ENCODE measurements at regions of chr13 and their contacts with region 1.

Region 1: GRCh38 chr13:52194184-52194868 is 34.9 kb upstream of the NEK3 start:
- DNase-seq: peak; percentile 77 to 92 (median 84)
- ATAC-seq: peak; percentile 94
- H3K4me3 ChIP-seq: peak overlapping the region; percentile 67
- H3K4me3 Mint-ChIP-seq: peak overlapping the region; percentile 88 to 99 (median 98)
- H3K27ac ChIP-seq: peak overlapping the region; percentile 78
- H3K27ac Mint-ChIP-seq: peak overlapping the region; percentile 90 to 98 (median 95)
- H3K4me1 ChIP-seq: no peaks in the 10 kb centered on the region
- H3K4me1 Mint-ChIP-seq: peaks cover 15 to 42% (median 37%) of the 10 kb centered on the region in 7 donors
- H3K27me3 ChIP-seq: no peaks in the 10 kb centered on the region
- H3K27me3 Mint-ChIP-seq: peaks cover 0 to 3% (median 0%) of the 10 kb centered on the region in 5 donors

Region 2: DNA sequence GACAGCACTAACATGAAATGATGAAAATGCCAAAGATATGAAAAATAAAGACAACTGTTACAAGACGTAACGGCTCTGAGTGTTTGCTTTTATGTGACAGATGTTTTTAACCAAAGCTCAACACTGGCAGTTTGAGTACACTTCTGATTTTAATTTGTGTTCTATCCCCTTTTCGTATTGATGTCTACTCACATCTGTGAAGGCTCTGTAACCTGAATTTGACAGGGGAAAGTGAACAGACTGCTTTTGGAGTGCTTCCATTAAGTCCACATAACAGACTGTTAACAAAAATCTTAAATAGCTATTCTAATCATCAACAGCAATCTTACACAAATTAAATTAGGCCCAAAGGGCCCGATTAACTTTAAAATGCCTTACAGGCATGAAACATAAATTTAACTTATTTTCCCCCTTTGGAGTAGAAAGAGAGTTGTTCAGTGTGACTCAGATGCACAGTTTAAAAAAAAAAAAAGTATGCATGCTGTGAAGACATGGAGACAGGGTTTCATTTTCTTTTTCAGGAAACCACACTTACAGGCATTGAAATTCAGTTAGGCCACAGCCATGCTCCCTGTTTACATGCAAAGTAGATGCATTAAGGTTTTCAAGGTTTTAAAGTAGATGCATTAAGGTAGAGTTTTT is 1301.0 kb before region 1 on chr13:
- CTCF ChIA-PET with region 1: no interaction called
- POLR2A ChIA-PET with region 1: no interaction called
- intact Hi-C with region 1: loop called in 1 of 2 experiments (anchors 10 kb)
- DNase-seq: peak in 7 of 9 donors; percentile 34 to 68 (median 55)
- ATAC-seq: peak; percentile 91
- H3K4me3 ChIP-seq: peak overlapping the region; percentile 30
- H3K4me3 Mint-ChIP-seq: peak overlapping the region; percentile 67 to 88 (median 82)
- H3K27ac ChIP-seq: peak overlapping the region; percentile 69
- H3K27ac Mint-ChIP-seq: peak overlapping the region; percentile 82 to 98 (median 95)
- H3K4me1 ChIP-seq: peaks cover 16 to 27% of the 10 kb centered on the region in 2 donors
- H3K4me1 Mint-ChIP-seq: peaks cover 26 to 50% (median 47%) of the 10 kb centered on the region in 7 donors
- H3K27me3 ChIP-seq: no peaks in the 10 kb centered on the region
- H3K27me3 Mint-ChIP-seq: no peaks in the 10 kb centered on the region

Region 3: GRCh38 chr13:51825165-51825592 is 369.1 kb before region 1 on chr13:
- CTCF ChIA-PET with region 1: interaction called, 3 read pairs
- POLR2A ChIA-PET with region 1: interaction called, 8 read pairs
- intact Hi-C with region 1: loop called (anchors 2 kb)
- DNase-seq: peak in 7 of 9 donors; percentile 62 to 90 (median 84)
- ATAC-seq: peak; percentile 81
- H3K4me3 ChIP-seq: peak overlapping the region; percentile 75
- H3K4me3 Mint-ChIP-seq: peak overlapping the region; percentile 62 to 100 (median 97)
- H3K27ac ChIP-seq: peak overlapping the region; percentile 85
- H3K27ac Mint-ChIP-seq: peak overlapping the region; percentile 86 to 99 (median 95)
- H3K4me1 ChIP-seq: peaks cover 61 to 78% of the 10 kb centered on the region in 2 donors
- H3K4me1 Mint-ChIP-seq: peaks cover 57 to 80% (median 63%) of the 10 kb centered on the region in 7 donors
- H3K27me3 ChIP-seq: no peaks in the 10 kb centered on the region
- H3K27me3 Mint-ChIP-seq: peaks cover 0 to 10% (median 0%) of the 10 kb centered on the region in 5 donors

Region 4: GRCh38 chr13:51935326-51936201 is 258.8 kb before region 1 on chr13:
- CTCF ChIA-PET with region 1: no interaction called
- POLR2A ChIA-PET with region 1: no interaction called
- intact Hi-C with region 1: no loop called
- DNase-seq: no peak
- ATAC-seq: no peak
- H3K4me3 ChIP-seq: no peak overlapping the region
- H3K4me3 Mint-ChIP-seq: no peak overlapping the region
- H3K27ac ChIP-seq: no peak overlapping the region
- H3K27ac Mint-ChIP-seq: peak overlapping the region in 1 of 9 donors; percentile 51
- H3K4me1 ChIP-seq: peaks cover 0 to under 1% of the 10 kb centered on the region in 2 donors
- H3K4me1 Mint-ChIP-seq: peaks cover 0 to 18% (median 10%) of the 10 kb centered on the region in 7 donors
- H3K27me3 ChIP-seq: no peaks in the 10 kb centered on the region
- H3K27me3 Mint-ChIP-seq: peaks cover 0 to 3% (median 0%) of the 10 kb centered on the region in 5 donors

Region 5: DNA sequence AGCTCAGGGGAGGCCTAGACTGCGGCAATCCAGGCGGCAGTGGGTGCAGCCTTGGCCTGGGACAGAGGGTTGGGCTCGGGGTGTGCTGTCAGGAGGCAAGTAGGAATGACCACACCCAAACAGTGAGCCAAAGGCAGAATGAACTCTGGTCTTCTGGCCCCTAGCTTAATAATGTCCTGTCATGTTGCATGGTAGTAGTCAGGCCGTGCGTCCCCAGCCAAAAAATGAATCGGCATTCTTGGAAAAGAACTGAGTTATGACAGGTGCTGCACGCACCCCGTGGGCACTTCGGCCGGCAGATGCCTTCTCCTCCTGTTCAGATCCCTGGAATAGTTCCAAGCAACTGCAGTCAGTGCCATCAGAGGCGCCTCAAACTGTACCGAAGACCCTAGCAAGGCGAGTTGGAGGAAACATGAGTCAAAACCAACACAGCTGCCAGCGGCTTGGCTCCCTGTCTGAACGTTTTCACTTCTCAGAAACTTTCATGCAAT is 239.0 kb before region 1 on chr13:
- CTCF ChIA-PET with region 1: no interaction called
- POLR2A ChIA-PET with region 1: no interaction called
- intact Hi-C with region 1: loop called in 1 of 2 experiments (anchors 1 kb)
- DNase-seq: no peak
- ATAC-seq: no peak
- H3K4me3 ChIP-seq: no peak overlapping the region
- H3K4me3 Mint-ChIP-seq: no peak overlapping the region
- H3K27ac ChIP-seq: no peak overlapping the region
- H3K27ac Mint-ChIP-seq: no peak overlapping the region
- H3K4me1 ChIP-seq: peaks cover 3 to 34% of the 10 kb centered on the region in 2 donors
- H3K4me1 Mint-ChIP-seq: peaks cover 30 to 58% (median 51%) of the 10 kb centered on the region in 7 donors
- H3K27me3 ChIP-seq: no peaks in the 10 kb centered on the region
- H3K27me3 Mint-ChIP-seq: peaks cover 0 to 8% (median 0%) of the 10 kb centered on the region in 5 donors

Region 6: GRCh38 chr13:52159321-52160086 is 34.8 kb before region 1 on chr13 and contains the start of gene NEK3:
- CTCF ChIA-PET with region 1: no interaction called
- POLR2A ChIA-PET with region 1: interaction called, 15 read pairs
- intact Hi-C with region 1: loop called (anchors 1 kb)
- DNase-seq: peak; percentile 32 to 69 (median 51)
- ATAC-seq: peak; percentile 83
- H3K4me3 ChIP-seq: peak within 1 kb of the TSS; percentile 69
- H3K4me3 Mint-ChIP-seq: peak within 1 kb of the TSS; percentile 86 to 92 (median 90)
- H3K27ac ChIP-seq: peak within 1 kb of the TSS; percentile 61
- H3K27ac Mint-ChIP-seq: peak within 1 kb of the TSS; percentile 62 to 94 (median 86)
- H3K4me1 ChIP-seq: peaks cover 6 to 15% of the 10 kb centered on the region in 2 donors
- H3K4me1 Mint-ChIP-seq: peaks cover 16 to 55% (median 51%) of the 10 kb centered on the region in 7 donors
- H3K27me3 ChIP-seq: no peaks in the 10 kb centered on the region
- H3K27me3 Mint-ChIP-seq: peaks cover 0 to 5% (median 0%) of the 10 kb centered on the region in 5 donors
- total RNA-seq, gene NEK3: 4.4 to 7.8 (median 4.5) TPM

Region 7: GRCh38 chr13:52179925-52180324 is 14.4 kb before region 1 on chr13:
- CTCF ChIA-PET with region 1: no interaction called
- POLR2A ChIA-PET with region 1: no interaction called
- intact Hi-C with region 1: no loop called
- DNase-seq: no peak
- ATAC-seq: no peak
- H3K4me3 ChIP-seq: no peak overlapping the region
- H3K4me3 Mint-ChIP-seq: no peak overlapping the region
- H3K27ac ChIP-seq: no peak overlapping the region
- H3K27ac Mint-ChIP-seq: no peak overlapping the region
- H3K4me1 ChIP-seq: no peaks in the 10 kb centered on the region
- H3K4me1 Mint-ChIP-seq: peaks cover 0 to 5% (median 0%) of the 10 kb centered on the region in 7 donors
- H3K27me3 ChIP-seq: no peaks in the 10 kb centered on the region
- H3K27me3 Mint-ChIP-seq: no peaks in the 10 kb centered on the region

Region 8: DNA sequence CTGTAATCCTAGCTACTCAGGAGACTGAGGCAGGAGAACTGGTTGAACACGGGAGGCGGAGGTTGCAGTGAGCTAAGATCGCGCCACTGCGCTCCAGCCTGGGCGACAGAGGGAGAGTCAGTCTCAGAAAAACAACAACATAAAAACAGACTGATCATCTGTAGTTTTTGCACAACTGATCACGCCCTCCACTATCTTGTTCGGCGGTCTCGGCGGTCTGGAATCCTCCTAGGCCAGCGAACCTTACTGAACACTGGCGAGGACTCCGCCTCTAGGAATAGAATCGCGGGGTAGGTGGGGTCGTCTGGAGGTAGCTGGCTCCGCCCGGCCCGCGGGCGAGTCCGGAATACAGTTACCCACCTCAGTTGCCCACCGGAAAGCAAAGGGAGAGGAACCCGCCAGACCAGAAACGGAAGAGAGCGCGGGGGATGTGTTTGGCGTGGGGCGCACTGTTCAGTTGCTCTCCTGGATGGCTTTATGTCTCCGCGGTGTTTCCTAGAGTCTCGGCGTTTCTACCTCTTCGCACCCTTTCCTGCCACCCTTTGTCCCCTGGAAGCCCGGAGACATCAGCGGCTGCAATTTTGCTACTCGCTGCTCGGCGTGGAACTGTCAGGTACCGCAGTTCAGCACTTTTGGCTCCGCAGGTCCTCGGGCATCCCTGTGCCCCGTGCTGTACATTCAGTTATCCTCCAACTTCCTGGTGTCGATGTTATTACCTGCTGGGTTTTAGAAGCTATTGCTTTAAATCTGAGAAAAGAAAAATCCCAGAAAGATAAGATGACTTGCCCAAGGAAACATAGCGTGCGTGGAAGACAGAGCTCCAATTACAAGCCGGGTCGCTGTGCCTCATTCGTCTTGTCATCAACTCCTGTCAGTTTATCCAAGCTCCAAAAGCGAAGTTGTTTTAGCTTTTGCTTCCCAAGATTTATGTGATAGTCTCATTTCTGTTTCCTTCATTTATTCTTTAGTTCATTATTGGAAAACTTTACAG is 423.0 kb after region 1 on chr13:
- CTCF ChIA-PET with region 1: no interaction called
- POLR2A ChIA-PET with region 1: interaction called, 5 read pairs
- intact Hi-C with region 1: loop called in 1 of 2 experiments (anchors 1 kb)
- DNase-seq: peak; percentile 61 to 85 (median 81)
- ATAC-seq: peak; percentile 97
- H3K4me3 ChIP-seq: peak overlapping the region; percentile 90
- H3K4me3 Mint-ChIP-seq: peak overlapping the region; percentile 86 to 100 (median 99)
- H3K27ac ChIP-seq: peak overlapping the region; percentile 76
- H3K27ac Mint-ChIP-seq: peak overlapping the region; percentile 95 to 97 (median 96)
- H3K4me1 ChIP-seq: peaks cover 0 to 13% of the 10 kb centered on the region in 2 donors
- H3K4me1 Mint-ChIP-seq: peaks cover 19 to 57% (median 39%) of the 10 kb centered on the region in 7 donors
- H3K27me3 ChIP-seq: no peaks in the 10 kb centered on the region
- H3K27me3 Mint-ChIP-seq: peaks cover 0 to 8% (median 0%) of the 10 kb centered on the region in 5 donors

Region 9: DNA sequence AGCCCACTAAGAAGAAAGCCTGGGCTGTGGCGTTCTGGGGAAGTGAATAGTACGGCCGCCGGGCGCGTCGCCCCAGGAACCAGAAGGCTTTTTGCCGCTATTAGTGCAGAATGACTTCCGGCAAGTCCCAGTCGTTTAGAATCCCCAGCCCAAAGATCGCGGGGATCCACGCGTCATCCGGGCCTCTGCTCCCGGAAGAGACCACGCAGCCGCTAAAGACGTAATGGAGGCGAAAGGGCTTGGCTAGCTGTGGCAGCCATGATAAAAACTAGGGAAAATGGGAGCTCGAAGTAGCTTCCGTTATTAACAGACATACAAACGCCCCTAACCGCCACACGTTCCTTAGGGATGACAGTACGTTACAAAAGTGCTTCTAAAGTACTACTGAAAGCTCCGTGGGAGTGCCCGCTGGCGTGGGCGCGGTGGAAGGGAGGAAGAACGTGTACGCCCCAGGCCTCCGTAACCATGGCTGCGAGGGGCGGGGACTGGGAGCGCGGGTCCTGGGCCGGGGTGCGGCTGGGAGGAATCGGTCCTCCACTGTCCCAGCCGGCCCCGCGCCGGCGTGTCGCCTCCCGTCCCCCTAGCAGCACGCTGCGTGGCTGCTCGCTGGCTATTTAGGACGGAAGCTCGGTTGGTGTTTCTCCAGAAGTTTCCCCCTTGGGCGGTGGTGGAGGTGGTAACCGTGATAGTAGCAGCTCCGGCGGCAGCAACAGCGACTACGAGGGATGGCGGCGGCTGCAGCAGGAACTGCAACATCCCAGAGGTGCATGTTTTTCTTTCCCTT is 458.1 kb after region 1 on chr13 and contains the start of gene SUGT1:
- CTCF ChIA-PET with region 1: no interaction called
- POLR2A ChIA-PET with region 1: interaction called, 6 read pairs
- intact Hi-C with region 1: loop called (anchors 1 kb)
- DNase-seq: peak; percentile 90 to 97 (median 95)
- ATAC-seq: peak; percentile 96
- H3K4me3 ChIP-seq: peak within 1 kb of the TSS; percentile 87
- H3K4me3 Mint-ChIP-seq: no peak within 1 kb of the TSS
- H3K27ac ChIP-seq: peak within 1 kb of the TSS; percentile 94
- H3K27ac Mint-ChIP-seq: no peak within 1 kb of the TSS
- H3K4me1 ChIP-seq: peaks cover 17 to 22% of the 10 kb centered on the region in 2 donors
- H3K4me1 Mint-ChIP-seq: peaks cover 6 to 18% (median 13%) of the 10 kb centered on the region in 7 donors
- H3K27me3 ChIP-seq: no peaks in the 10 kb centered on the region
- H3K27me3 Mint-ChIP-seq: no peaks in the 10 kb centered on the region
- total RNA-seq, gene SUGT1: 21.3 to 49.0 (median 33.8) TPM

Region 10: GRCh38 chr13:52896827-52897659 is 702.7 kb after region 1 on chr13:
- CTCF ChIA-PET with region 1: no interaction called
- POLR2A ChIA-PET with region 1: no interaction called
- intact Hi-C with region 1: no loop called
- DNase-seq: no peak
- ATAC-seq: no peak
- H3K4me3 ChIP-seq: no peak overlapping the region
- H3K4me3 Mint-ChIP-seq: no peak overlapping the region
- H3K27ac ChIP-seq: no peak overlapping the region
- H3K27ac Mint-ChIP-seq: no peak overlapping the region
- H3K4me1 ChIP-seq: no peaks in the 10 kb centered on the region
- H3K4me1 Mint-ChIP-seq: peaks cover 0 to 1% (median 0%) of the 10 kb centered on the region in 7 donors
- H3K27me3 ChIP-seq: no peaks in the 10 kb centered on the region
- H3K27me3 Mint-ChIP-seq: peaks cover 0 to 24% (median 5%) of the 10 kb centered on the region in 5 donors

Region 11: DNA sequence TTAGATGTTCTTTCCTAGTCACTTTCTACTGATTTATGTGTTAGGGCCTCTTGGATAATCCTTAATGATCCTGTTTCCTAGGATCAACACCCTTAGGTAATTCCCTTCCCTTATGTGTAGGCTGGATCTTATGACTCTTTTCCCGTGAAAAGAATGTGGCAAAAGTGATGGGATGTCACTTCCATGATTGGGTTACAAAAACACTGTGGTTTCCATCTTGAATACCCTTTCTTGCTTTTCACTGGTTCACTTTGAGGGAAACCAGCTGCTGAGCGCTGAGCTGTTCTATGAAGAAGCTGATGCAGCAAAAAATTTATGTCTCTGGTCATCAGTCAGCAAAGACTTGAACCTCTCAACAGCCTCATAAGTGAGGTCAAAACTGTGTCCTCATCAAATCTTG is 1443.7 kb after region 1 on chr13:
- CTCF ChIA-PET with region 1: no interaction called
- POLR2A ChIA-PET with region 1: no interaction called
- intact Hi-C with region 1: no loop called
- DNase-seq: no peak
- ATAC-seq: no peak
- H3K4me3 ChIP-seq: no peak overlapping the region
- H3K4me3 Mint-ChIP-seq: no peak overlapping the region
- H3K27ac ChIP-seq: no peak overlapping the region
- H3K27ac Mint-ChIP-seq: no peak overlapping the region
- H3K4me1 ChIP-seq: no peaks in the 10 kb centered on the region
- H3K4me1 Mint-ChIP-seq: no peaks in the 10 kb centered on the region
- H3K27me3 ChIP-seq: no peaks in the 10 kb centered on the region
- H3K27me3 Mint-ChIP-seq: no peaks in the 10 kb centered on the region